ENCODE measurements at regions of chr18 and their contacts with region 1.

Region 1: GRCh38 chr18:59402432-59403090 is 43.5 kb upstream of the LMAN1 start:
- DNase-seq: peak; percentile 41 to 70 (median 51)
- ATAC-seq: peak; percentile 100
- H3K4me3 ChIP-seq: no peak overlapping the region
- H3K27ac ChIP-seq: no peak overlapping the region
- H3K4me1 ChIP-seq: no peaks in the 10 kb centered on the region; a peak in 1 of 5 replicates
- H3K27me3 ChIP-seq: no peaks in the 10 kb centered on the region; a peak in 1 of 5 replicates
- CTCF ChIP-seq: peak; percentile 76 to 96 (median 80)
- EP300 ChIP-seq: no peak
- POLR2A ChIP-seq: no peak
- RAD21 ChIP-seq: peak; percentile 95 to 96

Region 2: GRCh38 chr18:59083136-59083818 is 319.3 kb before region 1 on chr18:
- CTCF ChIA-PET with region 1: no interaction called
- POLR2A ChIA-PET with region 1: no interaction called
- in situ Hi-C with region 1: no loop called
- intact Hi-C with region 1: loop called (anchors 5 kb)
- DNase-seq: no peak
- ATAC-seq: no peak
- H3K4me3 ChIP-seq: no peak overlapping the region
- H3K27ac ChIP-seq: no peak overlapping the region
- H3K4me1 ChIP-seq: no peaks in the 10 kb centered on the region; a peak in 1 of 5 replicates
- H3K27me3 ChIP-seq: peaks cover 0 to 5% of the 10 kb centered on the region in 2 experiments; a peak in 2 of 5 replicates
- CTCF ChIP-seq: no peak
- EP300 ChIP-seq: no peak
- POLR2A ChIP-seq: no peak
- RAD21 ChIP-seq: no peak

Region 3: DNA sequence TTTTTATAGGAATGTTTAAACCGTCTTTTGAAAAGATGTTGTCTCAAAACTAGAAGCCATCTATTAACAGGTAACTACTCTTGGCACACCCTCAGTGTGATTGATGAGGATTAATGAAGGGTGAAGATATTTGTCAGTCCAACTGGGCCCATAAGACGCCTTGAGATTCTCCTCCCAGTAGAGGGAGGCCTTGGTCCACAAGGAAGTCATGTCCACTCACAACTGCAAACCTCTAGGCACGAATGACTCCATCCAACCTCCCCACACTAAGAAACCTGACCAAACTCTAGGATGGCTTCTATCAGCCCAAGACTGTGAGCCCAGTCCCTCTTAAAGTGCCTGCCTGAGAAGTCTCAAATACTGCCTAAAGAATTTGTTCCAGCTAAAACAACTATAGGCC is 201.8 kb before region 1 on chr18:
- CTCF ChIA-PET with region 1: no interaction called
- POLR2A ChIA-PET with region 1: no interaction called
- in situ Hi-C with region 1: no loop called
- intact Hi-C with region 1: loop called (anchors 5 kb)
- DNase-seq: peak in 1 of 4 experiments; percentile 1
- ATAC-seq: no peak
- H3K4me3 ChIP-seq: no peak overlapping the region
- H3K27ac ChIP-seq: no peak overlapping the region
- H3K4me1 ChIP-seq: no peaks in the 10 kb centered on the region
- H3K27me3 ChIP-seq: no peaks in the 10 kb centered on the region; a peak in 1 of 5 replicates
- CTCF ChIP-seq: no peak
- EP300 ChIP-seq: no peak
- POLR2A ChIP-seq: no peak
- RAD21 ChIP-seq: 0 out of 4 replicates have a peak, but pooled peaks of 1 of the 2 experiments have one; percentile 11

Region 4: GRCh38 chr18:59249205-59249774 is 153.3 kb before region 1 on chr18:
- CTCF ChIA-PET with region 1: interaction called, 18 read pairs
- POLR2A ChIA-PET with region 1: no interaction called
- in situ Hi-C with region 1: no loop called
- intact Hi-C with region 1: loop called (anchors 5 kb)
- DNase-seq: peak; percentile 16 to 59 (median 24)
- ATAC-seq: peak; percentile 81
- H3K4me3 ChIP-seq: no peak overlapping the region
- H3K27ac ChIP-seq: no peak overlapping the region
- H3K4me1 ChIP-seq: no peaks in the 10 kb centered on the region
- H3K27me3 ChIP-seq: no peaks in the 10 kb centered on the region
- CTCF ChIP-seq: peak; percentile 50 to 67 (median 59); a peak in 5 of 6 replicates
- EP300 ChIP-seq: no peak
- POLR2A ChIP-seq: no peak
- RAD21 ChIP-seq: peak; percentile 66 to 75

Region 5: GRCh38 chr18:59308248-59308937 is 94.2 kb before region 1 on chr18:
- CTCF ChIA-PET with region 1: interaction called, 40 read pairs
- POLR2A ChIA-PET with region 1: no interaction called
- in situ Hi-C with region 1: no loop called
- intact Hi-C with region 1: loop called (anchors 5 kb)
- DNase-seq: peak; percentile 67 to 71 (median 68)
- ATAC-seq: peak; percentile 99
- H3K4me3 ChIP-seq: peak overlapping the region; percentile 28
- H3K27ac ChIP-seq: no peak overlapping the region
- H3K4me1 ChIP-seq: peaks cover 0 to 5% of the 10 kb centered on the region in 2 experiments; a peak in 2 of 5 replicates
- H3K27me3 ChIP-seq: peaks cover 3 to 17% of the 10 kb centered on the region in 2 experiments; a peak in 4 of 5 replicates
- CTCF ChIP-seq: peak; percentile 68 to 86 (median 68)
- EP300 ChIP-seq: no peak
- POLR2A ChIP-seq: no peak
- RAD21 ChIP-seq: peak; percentile 82 to 83

Region 6: DNA sequence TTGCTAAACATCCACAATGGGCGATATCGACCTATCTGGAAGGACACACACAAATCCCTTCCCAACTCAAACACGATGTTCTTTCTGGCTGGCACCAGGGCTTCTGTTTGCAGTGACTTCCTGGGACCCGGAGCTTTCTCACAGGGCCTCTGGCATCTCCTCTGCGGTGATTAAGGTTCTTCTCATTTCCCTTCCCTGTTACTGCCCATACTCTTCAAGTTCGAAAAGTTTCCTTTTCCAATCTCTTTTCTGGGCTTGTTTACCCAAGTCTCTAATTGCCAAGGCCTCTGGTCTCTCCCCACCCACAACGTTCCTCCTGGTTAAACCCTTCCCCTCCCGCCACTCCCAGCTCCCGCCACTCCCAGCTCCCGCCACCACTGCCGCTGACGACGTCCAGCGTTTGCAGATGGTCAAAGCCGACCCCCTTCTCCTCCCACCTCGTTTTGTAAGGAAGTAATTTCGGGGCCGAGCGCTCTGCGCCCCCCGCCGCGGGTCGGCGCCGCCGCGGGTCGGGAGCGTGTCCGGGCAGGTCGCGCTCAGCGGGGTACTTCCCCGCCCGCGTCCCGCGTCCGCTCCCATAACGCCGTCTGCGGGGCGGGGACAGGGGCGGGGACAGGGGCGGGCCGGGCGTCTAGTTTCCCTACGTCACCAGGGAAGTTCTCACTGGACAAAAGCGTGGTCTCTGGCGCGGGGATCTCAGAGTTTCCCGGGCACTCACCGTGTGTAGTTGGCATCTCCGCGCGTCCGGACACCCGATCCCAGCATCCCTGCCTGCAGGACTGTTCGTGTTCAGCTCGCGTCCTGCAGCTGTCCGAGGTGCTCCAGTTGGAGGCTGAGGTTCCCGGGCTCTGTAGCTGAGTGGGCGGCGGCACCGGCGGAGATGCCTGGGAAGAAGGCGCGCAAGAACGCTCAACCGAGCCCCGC is 497.0 kb after region 1 on chr18 and contains the start of gene PMAIP1:
- CTCF ChIA-PET with region 1: no interaction called
- POLR2A ChIA-PET with region 1: no interaction called
- in situ Hi-C with region 1: no loop called
- intact Hi-C with region 1: no loop called
- DNase-seq: peak; percentile 81 to 87 (median 83)
- ATAC-seq: peak; percentile 90
- H3K4me3 ChIP-seq: peak within 1 kb of the TSS; percentile 85
- H3K27ac ChIP-seq: peak within 1 kb of the TSS; percentile 71
- H3K4me1 ChIP-seq: peaks cover 7 to 14% of the 10 kb centered on the region in 2 experiments; a peak in 4 of 5 replicates
- H3K27me3 ChIP-seq: no peaks in the 10 kb centered on the region
- CTCF ChIP-seq: no peak
- EP300 ChIP-seq: no peak
- POLR2A ChIP-seq: peak; percentile 90
- RAD21 ChIP-seq: no peak
- polyA plus RNA-seq, gene PMAIP1: 10.0 to 14.9 TPM